T-cell (primary cell): ENCODE measurements at regions of chr20 and their contacts with region 1.

Region 1: DNA sequence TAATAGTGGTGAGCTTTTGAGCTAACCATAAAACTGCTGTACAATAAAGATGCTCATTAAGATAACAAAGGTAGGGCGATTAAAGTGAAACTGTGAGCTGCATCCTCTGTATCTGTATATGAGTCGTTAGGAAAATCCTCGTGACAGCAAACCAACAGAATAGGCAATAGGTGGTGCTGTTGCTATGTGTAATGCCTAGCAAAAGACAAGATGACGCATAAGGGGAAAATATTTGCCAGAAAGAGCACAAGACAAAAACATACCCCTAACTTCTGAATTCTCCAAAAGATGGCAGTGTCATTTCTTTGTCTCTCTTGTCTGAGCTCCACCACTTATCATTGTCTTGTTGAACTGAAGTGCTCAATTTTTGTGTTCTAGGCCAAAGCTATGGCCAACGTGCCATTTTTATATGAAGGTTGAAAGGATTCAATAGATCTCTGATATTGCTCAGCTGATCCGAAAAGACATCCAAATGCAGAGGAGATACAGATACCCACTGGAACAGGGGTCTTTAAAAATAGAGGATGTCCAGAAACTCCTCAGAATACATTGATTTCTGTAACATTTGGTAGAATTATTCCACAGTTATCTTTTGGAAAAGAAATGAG is 56.3 kb upstream of the ANKEF1 start:
- DNase-seq: peak in 25 of 35 experiments; percentile 4 to 79 (median 20)
- ATAC-seq: peak; percentile 78 to 81 (median 79)
- H3K4me3 ChIP-seq: no peak overlapping the region
- H3K4me3 Mint-ChIP-seq: no peak overlapping the region
- H3K27ac ChIP-seq: no peak overlapping the region
- H3K27ac Mint-ChIP-seq: no peak overlapping the region
- H3K4me1 ChIP-seq: no peaks in the 10 kb centered on the region
- H3K4me1 Mint-ChIP-seq: peaks cover 0 to 2% (median 0%) of the 10 kb centered on the region in 3 donors
- H3K27me3 ChIP-seq: peaks cover 0 to 3% of the 10 kb centered on the region in 2 experiments
- H3K27me3 Mint-ChIP-seq: no peaks in the 10 kb centered on the region

Region 2: DNA sequence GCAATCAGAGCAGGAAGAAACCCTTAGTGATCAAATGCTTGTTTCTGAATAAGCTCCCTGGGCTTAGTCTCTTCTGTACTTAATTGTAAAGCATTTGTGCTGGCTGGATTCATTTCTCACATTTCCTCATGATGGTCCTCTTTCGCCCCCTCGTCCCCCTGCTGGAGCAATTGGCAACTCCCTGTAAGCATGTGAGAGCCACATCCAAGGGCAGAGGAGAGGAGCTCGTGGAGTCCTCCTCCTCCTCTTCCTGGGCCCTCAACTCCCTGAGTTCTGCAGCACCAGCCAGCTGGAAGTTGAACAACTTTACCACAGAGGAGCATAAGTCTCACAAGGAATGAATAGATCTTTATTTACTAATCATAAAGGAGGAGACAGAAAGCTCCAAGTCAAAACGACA is 68.9 kb after region 1 on chr20:
- CTCF ChIA-PET with region 1: no interaction called
- POLR2A ChIA-PET with region 1: no interaction called
- DNase-seq: no peak
- ATAC-seq: no peak
- H3K4me3 ChIP-seq: no peak overlapping the region
- H3K4me3 Mint-ChIP-seq: no peak overlapping the region
- H3K27ac ChIP-seq: no peak overlapping the region
- H3K27ac Mint-ChIP-seq: no peak overlapping the region
- H3K4me1 ChIP-seq: no peaks in the 10 kb centered on the region
- H3K4me1 Mint-ChIP-seq: no peaks in the 10 kb centered on the region
- H3K27me3 ChIP-seq: no peaks in the 10 kb centered on the region
- H3K27me3 Mint-ChIP-seq: no peaks in the 10 kb centered on the region

Region 3: DNA sequence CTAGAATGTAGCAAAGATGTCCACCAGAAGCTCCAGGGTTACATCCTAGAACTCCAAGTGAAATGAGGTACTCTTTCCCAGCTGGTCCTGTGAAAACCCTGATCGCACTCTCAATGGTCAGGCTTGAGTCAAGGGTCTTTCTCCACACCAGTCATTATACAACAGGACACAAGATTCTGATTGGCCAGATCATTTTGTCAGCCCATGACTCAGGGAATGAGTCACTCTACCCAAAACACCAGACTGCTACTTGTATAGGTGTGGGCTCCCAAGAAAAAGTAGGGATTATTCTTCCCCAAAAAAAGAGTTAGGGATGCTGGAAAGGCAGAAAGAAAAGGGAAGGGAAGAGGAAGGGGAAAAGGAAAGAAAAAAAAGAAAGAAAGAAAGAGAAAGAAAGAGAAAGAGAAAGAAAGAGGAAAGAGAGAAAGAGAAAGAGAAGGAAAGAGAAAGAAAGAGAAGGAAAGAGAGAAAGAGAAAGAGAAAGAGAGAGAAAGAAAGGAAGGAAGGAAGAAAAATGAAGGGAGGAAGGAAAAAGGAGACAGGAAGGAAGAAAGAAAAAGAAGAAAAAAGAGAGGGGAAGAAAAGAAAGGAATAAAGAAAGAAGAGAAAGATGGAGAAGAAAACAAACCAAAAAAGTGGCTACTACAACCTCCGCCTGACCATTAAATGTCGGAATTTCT is 86.8 kb after region 1 on chr20:
- CTCF ChIA-PET with region 1: no interaction called
- POLR2A ChIA-PET with region 1: no interaction called
- DNase-seq: no peak
- ATAC-seq: no peak
- H3K4me3 ChIP-seq: no peak overlapping the region
- H3K4me3 Mint-ChIP-seq: no peak overlapping the region
- H3K27ac ChIP-seq: no peak overlapping the region
- H3K27ac Mint-ChIP-seq: no peak overlapping the region
- H3K4me1 ChIP-seq: no peaks in the 10 kb centered on the region
- H3K4me1 Mint-ChIP-seq: no peaks in the 10 kb centered on the region
- H3K27me3 ChIP-seq: no peaks in the 10 kb centered on the region
- H3K27me3 Mint-ChIP-seq: peaks cover 16 to 28% of the 10 kb centered on the region in 2 donors

Region 4: GRCh38 chr20:10090588-10091166 is 112.2 kb after region 1 on chr20:
- CTCF ChIA-PET with region 1: interaction called, 29 to 39 read pairs
- POLR2A ChIA-PET with region 1: no interaction called
- DNase-seq: peak in 16 of 35 experiments; percentile 0 to 57 (median 6)
- ATAC-seq: peak in 2 of 4 experiments; percentile 54 to 55
- H3K4me3 ChIP-seq: no peak overlapping the region
- H3K4me3 Mint-ChIP-seq: no peak overlapping the region
- H3K27ac ChIP-seq: no peak overlapping the region
- H3K27ac Mint-ChIP-seq: no peak overlapping the region
- H3K4me1 ChIP-seq: no peaks in the 10 kb centered on the region
- H3K4me1 Mint-ChIP-seq: no peaks in the 10 kb centered on the region
- H3K27me3 ChIP-seq: no peaks in the 10 kb centered on the region
- H3K27me3 Mint-ChIP-seq: peaks cover 0 to 2% of the 10 kb centered on the region in 2 donors

Region 5: DNA sequence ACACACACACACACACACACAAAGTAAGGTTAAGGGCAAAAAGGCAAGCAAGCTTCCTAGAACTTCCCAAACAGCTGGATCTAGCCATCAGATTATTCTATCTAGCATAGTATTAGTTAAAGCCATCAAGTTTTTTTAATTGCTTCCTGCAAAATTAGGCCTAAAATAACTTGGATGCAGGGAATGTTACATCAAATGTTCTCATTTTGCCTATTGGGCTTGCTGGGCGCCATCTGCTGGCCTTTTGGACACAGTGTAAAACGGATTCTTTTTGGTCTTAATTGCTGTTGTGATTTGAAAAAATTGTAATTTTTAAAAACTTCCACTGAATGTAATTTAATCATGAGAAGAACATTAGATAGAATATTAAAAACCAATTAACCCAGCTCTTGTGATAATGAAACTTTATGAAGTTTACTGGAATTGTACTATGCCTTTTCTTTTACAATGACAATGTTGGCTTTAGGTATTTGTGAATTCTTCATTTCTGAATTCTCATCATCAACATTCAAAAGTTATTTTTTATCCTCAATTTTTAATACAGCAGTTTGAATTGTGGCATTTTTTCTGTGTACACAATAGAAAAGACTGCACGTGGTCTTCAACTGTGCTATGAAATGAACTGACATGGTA is 448.7 kb after region 1 on chr20:
- CTCF ChIA-PET with region 1: interaction called, 11 to 25 read pairs
- POLR2A ChIA-PET with region 1: no interaction called
- DNase-seq: peak in 26 of 35 experiments; percentile 9 to 66 (median 38)
- ATAC-seq: peak in 2 of 4 experiments; percentile 36 to 48
- H3K4me3 ChIP-seq: no peak overlapping the region
- H3K4me3 Mint-ChIP-seq: no peak overlapping the region
- H3K27ac ChIP-seq: no peak overlapping the region
- H3K27ac Mint-ChIP-seq: no peak overlapping the region
- H3K4me1 ChIP-seq: no peaks in the 10 kb centered on the region
- H3K4me1 Mint-ChIP-seq: peaks cover 47 to 55% (median 50%) of the 10 kb centered on the region in 3 donors
- H3K27me3 ChIP-seq: no peaks in the 10 kb centered on the region
- H3K27me3 Mint-ChIP-seq: no peaks in the 10 kb centered on the region

Region 6: GRCh38 chr20:10434467-10434831 is 455.9 kb after region 1 on chr20:
- CTCF ChIA-PET with region 1: interaction called in 1 of 2 experiments, 11 read pairs
- POLR2A ChIA-PET with region 1: no interaction called
- DNase-seq: peak; percentile 39 to 85 (median 58)
- ATAC-seq: peak; percentile 43 to 61 (median 52)
- H3K4me3 ChIP-seq: peak overlapping the region; percentile 66 to 98
- H3K4me3 Mint-ChIP-seq: peak overlapping the region; percentile 90 to 95 (median 92)
- H3K27ac ChIP-seq: peak overlapping the region; percentile 83
- H3K27ac Mint-ChIP-seq: peak overlapping the region; percentile 93 to 95
- H3K4me1 ChIP-seq: peaks cover 10 to 18% of the 10 kb centered on the region in 2 experiments
- H3K4me1 Mint-ChIP-seq: peaks cover 51 to 65% (median 59%) of the 10 kb centered on the region in 3 donors
- H3K27me3 ChIP-seq: no peaks in the 10 kb centered on the region
- H3K27me3 Mint-ChIP-seq: no peaks in the 10 kb centered on the region